ENCODE measurements at regions of chr10 and their contacts with region 1.

Region 1: DNA sequence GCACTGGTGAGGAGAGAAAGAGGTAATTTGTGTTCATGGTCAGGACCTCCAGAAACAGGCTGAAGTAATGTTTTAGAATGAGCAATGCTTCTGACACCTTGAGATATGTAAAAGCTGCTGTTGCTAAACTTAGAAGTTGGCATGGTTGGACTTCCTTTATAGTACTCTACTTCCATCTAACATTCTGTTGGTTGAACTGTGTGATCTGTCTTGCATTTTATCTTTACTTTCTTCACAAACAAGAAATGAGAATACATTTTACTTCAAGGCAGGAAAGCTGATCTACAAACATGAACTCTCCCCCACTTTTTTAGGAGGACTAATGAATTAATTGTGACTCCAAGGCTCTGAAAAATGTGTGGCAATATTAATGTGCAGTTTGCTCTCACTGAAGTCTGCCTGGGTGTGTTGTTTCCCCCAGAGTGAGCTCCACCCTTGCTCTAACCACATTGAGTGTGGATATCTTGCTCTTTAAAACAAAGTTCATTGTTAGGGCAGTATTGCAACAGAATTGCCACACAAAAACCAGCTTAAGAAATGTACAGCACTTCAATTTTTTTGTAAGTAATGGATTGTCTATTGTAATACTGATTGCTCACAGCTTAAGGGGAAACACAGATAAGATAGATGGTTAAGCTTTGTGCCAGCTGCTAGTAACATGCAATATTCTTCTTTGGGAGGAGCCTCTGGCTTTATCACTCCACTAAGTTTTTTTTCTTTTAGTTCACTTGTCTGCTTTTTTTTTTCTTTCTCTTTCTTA is 69.0 kb downstream of the ADD3 start:
- DNase-seq: no peak
- H3K4me3 ChIP-seq: no peak overlapping the region
- H3K27ac ChIP-seq: no peak overlapping the region
- H3K27me3 ChIP-seq: no peaks in the 10 kb centered on the region
- CTCF ChIP-seq: no peak

Region 2: DNA sequence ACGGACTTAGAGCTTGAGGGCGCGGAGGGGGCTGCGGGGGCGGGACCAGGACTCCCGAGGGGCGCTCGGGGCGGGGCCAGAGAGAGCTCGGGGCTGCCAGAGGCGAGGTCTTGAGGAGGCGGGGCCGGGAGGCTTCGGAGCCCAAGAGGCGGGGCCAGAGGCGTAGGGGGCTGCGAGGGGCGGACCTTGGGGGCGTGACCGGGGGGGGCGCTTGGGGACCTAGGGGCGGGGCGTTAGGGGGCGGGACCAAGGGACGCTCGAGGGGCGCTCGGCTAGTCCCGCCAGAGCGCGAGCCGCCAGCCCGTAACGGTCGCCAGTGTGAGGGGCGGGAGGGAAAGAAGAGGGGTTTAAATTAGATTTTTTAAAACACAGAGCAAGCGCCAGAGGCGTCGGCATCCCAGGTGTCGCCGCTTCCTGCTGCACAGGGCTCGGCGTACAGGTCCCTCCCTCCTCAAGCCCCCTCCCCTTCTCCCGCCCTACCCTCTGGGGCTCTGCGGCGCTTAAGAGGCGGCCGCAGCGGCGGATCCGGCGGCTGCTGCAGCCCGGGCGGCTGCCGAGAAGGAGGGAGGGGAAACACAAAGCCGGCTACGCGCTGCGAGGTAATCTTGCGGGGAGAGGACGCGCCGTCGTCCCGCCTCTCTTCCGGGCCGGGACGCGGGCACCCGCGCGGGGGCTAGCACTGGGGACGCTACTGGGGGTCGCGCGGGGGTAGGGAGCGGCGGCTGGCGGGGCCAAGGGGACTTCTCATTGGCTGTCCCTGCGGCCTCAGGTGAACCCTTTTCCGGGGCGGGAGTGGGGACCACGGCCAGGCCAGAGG is 68.8 kb before region 1 on chr10 and contains the start of gene ADD3:
- CTCF ChIA-PET with region 1: no interaction called
- POLR2A ChIA-PET with region 1: interaction called, 13 read pairs
- DNase-seq: peak; percentile 86
- H3K4me3 ChIP-seq: peak within 1 kb of the TSS; percentile 77
- H3K27ac ChIP-seq: peak within 1 kb of the TSS; percentile 83
- H3K27me3 ChIP-seq: no peaks in the 10 kb centered on the region
- CTCF ChIP-seq: no peak
- polyA plus RNA-seq, gene ADD3: 161 and 192 TPM in 2 replicates

Region 3: DNA sequence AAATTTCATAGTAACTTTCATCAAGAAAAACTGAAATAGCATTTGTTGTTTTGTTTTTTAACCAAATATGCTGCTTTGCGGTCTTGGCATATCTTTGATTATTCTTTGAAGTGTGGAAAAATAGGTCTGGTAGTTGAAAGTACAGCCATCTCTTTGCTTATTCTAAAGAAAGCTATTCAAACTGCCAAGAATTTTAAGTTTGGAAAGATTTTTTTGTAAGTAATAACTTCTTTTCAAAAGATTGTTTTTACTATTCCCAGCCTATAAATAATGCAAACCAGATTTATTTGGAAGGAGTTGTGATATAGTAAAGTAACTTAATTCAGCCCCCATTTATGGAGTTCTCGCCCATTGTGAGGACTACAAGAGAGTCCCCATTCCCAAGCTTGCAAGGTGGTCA is 18.0 kb after region 1 on chr10:
- CTCF ChIA-PET with region 1: no interaction called
- POLR2A ChIA-PET with region 1: no interaction called
- DNase-seq: no peak
- H3K4me3 ChIP-seq: no peak overlapping the region
- H3K27ac ChIP-seq: no peak overlapping the region
- H3K27me3 ChIP-seq: no peaks in the 10 kb centered on the region
- CTCF ChIP-seq: no peak

Measured in AG04450 (cell line).